Activated naive CD4-positive, alpha-beta T cell treated with anti-CD3 and anti-CD28 coated beads, Interleukin-2, amount 10 ng/mL, durations not matched to agents 7 days and 5 days (primary cell): ENCODE measurements at regions of chr4 and their contacts with region 1.

Region 1: GRCh38 chr4:138090150-138090917 is 151.8 kb downstream of the SLC7A11 start:
- DNase-seq: peak; percentile 37
- H3K4me3 Mint-ChIP-seq: no peak overlapping the region
- H3K27ac Mint-ChIP-seq: no peak overlapping the region
- H3K4me1 Mint-ChIP-seq: no peaks in the 10 kb centered on the region
- H3K27me3 Mint-ChIP-seq: no peaks in the 10 kb centered on the region

Region 2: GRCh38 chr4:138078751-138079520 is 11.4 kb before region 1 on chr4:
- CTCF ChIA-PET with region 1: interaction called, 12 read pairs
- DNase-seq: no peak
- H3K4me3 Mint-ChIP-seq: no peak overlapping the region
- H3K27ac Mint-ChIP-seq: no peak overlapping the region
- H3K4me1 Mint-ChIP-seq: no peaks in the 10 kb centered on the region
- H3K27me3 Mint-ChIP-seq: no peaks in the 10 kb centered on the region